ENCODE measurements at regions of chr17 and their contacts with region 1.

Region 1: DNA sequence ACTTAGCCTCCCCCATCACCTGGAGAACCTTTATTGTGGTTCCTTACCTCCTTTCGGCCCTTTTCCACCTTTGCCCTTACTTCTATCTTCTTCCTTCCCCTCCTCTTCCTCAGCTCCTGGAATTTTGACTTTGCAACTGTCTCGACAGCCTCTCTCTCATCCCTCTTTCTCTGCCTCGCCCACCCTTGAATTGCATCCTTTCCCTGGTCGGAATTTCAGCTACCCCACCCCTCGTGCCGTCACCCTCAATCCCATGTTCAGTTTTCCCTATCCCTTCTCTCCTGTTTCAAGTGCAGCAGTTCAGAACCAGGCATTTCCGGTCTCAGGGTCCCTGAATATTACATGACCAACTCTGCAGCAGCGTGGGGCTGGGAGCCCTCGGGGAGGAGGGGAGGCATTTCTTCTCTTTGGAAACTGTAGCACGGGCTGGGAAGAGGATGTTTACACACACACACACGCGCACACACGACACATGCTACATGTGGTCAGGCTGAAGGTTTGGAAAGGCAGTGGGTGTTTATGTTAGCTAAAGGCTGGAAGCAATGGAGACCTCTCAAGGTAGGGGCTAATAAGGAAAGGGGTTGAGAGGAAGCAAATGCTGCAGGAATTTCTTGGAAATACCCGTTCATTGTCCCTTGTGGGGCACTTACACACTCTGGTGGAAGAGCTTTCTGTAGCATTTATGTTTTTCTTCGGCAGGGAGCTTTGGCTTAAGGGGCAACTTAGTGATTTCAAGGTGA is 971 bp downstream of the MINK1 start:
- DNase-seq: peak in 3 of 10 donors; percentile 30 to 80 (median 75)

Region 2: GRCh38 chr17:4856937-4857314 is 22.8 kb after region 1 on chr17:
- intact Hi-C with region 1: loop called (anchors 1 kb)
- DNase-seq: peak in 8 of 10 donors; percentile 49 to 97 (median 70)

Region 3: DNA sequence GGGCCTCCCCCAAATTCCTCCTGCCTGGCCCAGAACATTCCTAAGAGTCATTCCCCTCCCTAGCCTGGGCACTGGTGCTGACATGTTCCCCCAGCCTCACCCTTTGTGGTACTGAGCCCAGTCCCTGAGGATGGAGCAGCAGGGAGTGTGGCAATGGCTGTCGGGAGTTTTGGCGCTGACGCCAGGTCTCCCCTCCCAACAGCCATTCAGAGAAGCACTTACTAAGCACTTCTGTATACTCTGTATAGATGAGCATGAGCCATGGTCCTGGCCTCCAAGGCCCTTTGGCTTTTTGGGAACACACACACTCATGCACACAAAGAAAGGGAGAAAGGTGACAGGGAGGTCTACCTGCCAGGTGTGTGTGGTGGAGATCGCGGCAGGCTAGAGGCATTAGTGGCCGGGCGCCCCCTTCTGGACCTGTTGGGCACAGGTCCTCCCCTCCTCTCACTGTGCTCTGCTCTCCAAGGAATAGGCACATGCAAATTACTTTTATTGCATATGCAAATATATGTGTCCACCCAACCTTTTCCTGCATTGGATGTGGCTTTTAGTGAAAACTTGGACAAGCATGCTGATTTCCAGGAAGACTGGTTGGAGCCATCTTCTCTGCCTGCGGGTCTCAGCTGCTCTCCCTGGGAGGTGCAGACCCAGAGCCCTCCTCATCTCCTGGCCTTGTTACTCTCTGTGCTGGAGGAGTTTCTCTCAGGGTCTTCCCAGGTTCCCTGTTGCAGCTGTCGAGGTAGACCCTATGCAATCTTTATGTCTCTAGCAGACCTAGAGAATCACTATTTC is 47.8 kb after region 1 on chr17:
- intact Hi-C with region 1: loop called (anchors 2 kb)
- DNase-seq: peak in 9 of 10 donors; percentile 58 to 94 (median 70)

Region 4: GRCh38 chr17:5050278-5050677 is 216.2 kb after region 1 on chr17:
- intact Hi-C with region 1: no loop called
- DNase-seq: no peak

Measured in posterior cingulate gyrus (tissue), 11 donors.